ENCODE measurements at regions of chr2 and their contacts with region 1.

Region 1: DNA sequence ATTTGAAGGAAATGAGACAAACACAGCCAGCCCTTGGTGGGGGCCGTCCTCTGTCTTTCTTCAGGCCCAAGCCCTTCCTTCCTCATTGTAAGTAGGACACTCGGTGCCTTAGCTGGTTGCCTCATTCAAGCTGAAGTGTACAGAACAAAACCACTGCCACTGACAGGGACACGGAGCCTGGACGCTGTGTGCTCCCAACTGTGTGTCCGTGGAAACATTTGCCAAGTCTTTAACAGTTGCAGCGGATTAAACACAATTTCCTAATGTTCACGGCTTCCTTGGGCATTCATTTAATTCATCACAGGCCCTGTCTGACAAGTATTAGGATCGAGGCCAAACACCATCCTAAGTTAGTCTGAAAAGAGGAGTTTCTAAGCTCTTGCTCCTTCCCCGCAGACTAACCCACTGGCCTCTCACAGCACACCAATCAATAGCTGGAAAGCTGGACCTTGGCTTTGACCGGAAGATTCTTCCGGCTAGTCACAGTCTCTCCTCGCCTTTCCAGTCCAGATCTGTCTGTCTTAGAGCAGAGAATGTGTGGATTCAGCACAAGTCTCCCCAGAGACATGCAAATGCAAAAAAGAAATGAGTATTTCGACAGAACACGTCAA is 68.7 kb upstream of the ACSL3 start:
- DNase-seq: no peak
- H3K4me3 ChIP-seq: no peak overlapping the region
- H3K27ac ChIP-seq: no peak overlapping the region
- H3K4me1 ChIP-seq: peaks cover 29% of the 10 kb centered on the region
- H3K27me3 ChIP-seq: no peaks in the 10 kb centered on the region
- CTCF ChIP-seq: no peak

Region 2: DNA sequence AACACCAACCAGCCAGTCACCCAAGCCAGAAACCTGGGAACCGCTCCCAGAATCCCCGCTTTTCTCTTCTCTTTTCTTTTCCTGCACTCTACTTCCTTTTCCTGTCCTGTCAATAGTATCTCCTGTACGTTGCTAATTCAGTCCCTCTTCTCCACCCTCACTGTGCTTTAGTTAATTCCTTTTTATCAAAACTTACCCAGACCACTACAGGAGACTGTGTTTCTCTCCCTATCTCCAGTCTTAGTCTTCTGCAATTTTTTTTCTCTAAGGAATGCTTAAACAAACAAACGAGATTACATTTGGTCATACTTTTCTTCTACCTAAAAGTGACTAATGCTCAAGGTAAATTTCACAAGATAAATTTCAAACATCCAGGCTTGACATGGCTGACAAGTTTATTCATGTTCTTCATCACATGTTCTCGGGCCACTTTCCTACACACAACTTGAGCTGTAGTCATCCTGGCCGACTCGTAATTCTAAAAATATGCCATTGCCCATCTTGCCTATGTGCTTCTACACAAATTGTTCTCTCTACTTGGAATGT is 45.5 kb after region 1 on chr2:
- CTCF ChIA-PET with region 1: interaction called, 8 read pairs
- POLR2A ChIA-PET with region 1: interaction called, 10 read pairs
- intact Hi-C with region 1: loop called (anchors 1 kb)
- DNase-seq: peak; percentile 75 to 100
- H3K4me3 ChIP-seq: peak overlapping the region; percentile 31; the same call in 1 of the 2 replicates
- H3K27ac ChIP-seq: peak overlapping the region; percentile 82
- H3K4me1 ChIP-seq: peaks cover 83% of the 10 kb centered on the region
- H3K27me3 ChIP-seq: no peaks in the 10 kb centered on the region
- CTCF ChIP-seq: no peak

Region 3: GRCh38 chr2:222878877-222879603 is 86.9 kb after region 1 on chr2:
- CTCF ChIA-PET with region 1: no interaction called
- POLR2A ChIA-PET with region 1: interaction called, 20 read pairs
- intact Hi-C with region 1: loop called (anchors 2 kb)
- DNase-seq: peak; percentile 79 to 99
- H3K4me3 ChIP-seq: no peak overlapping the region
- H3K27ac ChIP-seq: peak overlapping the region; percentile 69
- H3K4me1 ChIP-seq: peaks cover 88% of the 10 kb centered on the region
- H3K27me3 ChIP-seq: no peaks in the 10 kb centered on the region
- CTCF ChIP-seq: no peak

Region 4: DNA sequence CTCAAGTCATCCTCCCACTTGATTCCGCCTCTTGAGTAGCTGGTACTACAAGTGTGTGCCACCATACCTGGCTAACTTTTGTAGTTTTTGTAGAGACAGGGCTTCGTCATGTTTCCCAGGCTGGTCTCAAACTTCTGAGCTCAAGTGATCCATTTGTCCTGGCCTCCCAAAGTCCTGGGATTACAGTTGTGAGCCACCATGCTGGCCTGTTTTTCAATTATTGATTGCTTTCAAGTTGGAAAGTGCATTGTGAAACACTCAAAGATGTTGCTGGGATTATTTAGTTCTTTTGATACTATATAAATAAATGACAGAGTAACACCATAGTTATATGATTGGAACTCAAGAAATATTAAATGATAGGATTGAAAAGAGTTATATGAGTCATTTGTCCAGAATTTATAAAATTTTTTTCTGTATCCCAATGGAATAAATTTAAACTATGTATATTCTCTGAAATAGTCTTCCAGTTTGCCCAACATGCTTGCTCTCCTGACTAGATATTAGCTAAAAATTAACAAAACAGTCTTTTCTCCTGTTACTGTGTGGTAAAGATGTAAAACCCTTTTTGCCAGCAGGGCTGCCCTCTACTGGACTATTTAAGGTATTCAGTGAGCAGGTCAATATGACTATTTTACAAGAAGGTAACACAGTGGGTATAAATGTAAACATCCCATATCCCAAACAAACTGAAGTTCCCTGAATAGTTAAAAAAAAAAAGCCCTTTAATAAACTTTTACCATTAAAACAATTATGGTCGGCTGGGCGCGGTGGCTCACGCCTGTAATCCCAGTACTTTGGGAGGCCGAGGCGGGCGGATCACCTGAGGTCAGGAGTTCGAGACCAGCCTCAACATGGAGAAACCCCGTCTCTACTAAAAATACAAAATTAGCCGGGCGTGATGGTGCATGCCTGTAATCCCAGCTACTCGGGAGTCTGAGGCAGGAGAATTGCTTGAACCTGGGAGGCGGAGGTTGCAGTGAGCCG is 111.4 kb after region 1 on chr2:
- CTCF ChIA-PET with region 1: interaction called, 8 read pairs
- POLR2A ChIA-PET with region 1: interaction called, 3 read pairs
- intact Hi-C with region 1: loop called (anchors 1 kb)
- DNase-seq: peak; percentile 48 to 68
- H3K4me3 ChIP-seq: no peak overlapping the region
- H3K27ac ChIP-seq: 0 out of 2 replicates have a peak overlapping the region, but pooled peaks have one; percentile 7
- H3K4me1 ChIP-seq: peaks cover 29% of the 10 kb centered on the region
- H3K27me3 ChIP-seq: no peaks in the 10 kb centered on the region
- CTCF ChIP-seq: peak; percentile 99

Region 5: DNA sequence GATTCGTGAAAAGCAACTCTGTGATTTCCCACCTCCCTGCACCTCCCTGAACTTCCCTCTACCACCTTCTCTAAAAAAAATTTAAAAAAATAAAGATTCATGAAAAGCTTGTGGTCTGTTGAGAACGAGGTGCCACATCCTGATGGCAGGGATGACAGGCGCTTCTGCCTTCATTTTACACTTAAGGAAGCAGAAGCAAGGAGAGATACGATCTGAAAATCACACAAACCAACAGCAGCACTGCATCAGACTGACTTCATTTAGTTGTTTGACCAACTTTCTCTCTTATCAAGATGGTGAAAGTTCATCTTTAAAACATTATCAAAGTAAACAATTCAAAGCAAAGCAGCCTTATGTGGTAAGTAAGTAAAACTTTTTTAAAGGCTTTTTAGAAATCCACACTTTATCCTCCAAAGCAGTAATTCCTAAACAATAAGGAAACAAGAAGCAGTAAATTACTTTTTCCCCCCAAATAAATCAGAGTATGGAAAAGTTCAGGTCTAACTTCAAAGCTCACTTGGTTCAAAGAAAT is 1137.5 kb after region 1 on chr2:
- CTCF ChIA-PET with region 1: no interaction called
- POLR2A ChIA-PET with region 1: interaction called, 15 read pairs
- intact Hi-C with region 1: no loop called
- DNase-seq: peak; percentile 36 to 54
- H3K4me3 ChIP-seq: no peak overlapping the region
- H3K27ac ChIP-seq: no peak overlapping the region
- H3K4me1 ChIP-seq: peaks cover 34% of the 10 kb centered on the region
- H3K27me3 ChIP-seq: no peaks in the 10 kb centered on the region
- CTCF ChIP-seq: no peak